Spleen (tissue), 13 donors: ENCODE measurements at regions of chr20 and their contacts with region 1.

Region 1: DNA sequence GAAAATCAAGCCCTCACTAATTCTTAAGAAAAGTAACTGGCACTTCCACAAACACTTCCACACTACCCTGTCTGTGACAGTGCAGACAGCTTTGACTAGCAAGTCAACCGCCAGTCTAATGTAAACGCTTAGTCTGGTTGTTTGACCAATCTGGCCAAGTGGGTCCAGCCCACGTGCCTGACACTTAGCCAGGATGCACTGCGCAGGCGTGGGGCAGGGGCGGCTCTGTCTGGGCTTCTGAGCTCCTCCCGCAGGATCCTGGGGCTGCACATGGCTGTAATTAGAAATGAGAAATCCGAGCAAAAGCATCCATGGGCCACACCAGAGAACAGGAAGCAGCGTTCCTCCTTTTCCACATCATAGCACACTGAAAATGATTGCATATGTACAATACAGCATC is 424.1 kb downstream of the FOXA2 start:
- DNase-seq: no peak
- H3K4me3 ChIP-seq: no peak overlapping the region
- H3K27ac ChIP-seq: no peak overlapping the region
- H3K4me1 ChIP-seq: no peaks in the 10 kb centered on the region
- H3K27me3 ChIP-seq: no peaks in the 10 kb centered on the region
- CTCF ChIP-seq: no peak
- POLR2A ChIP-seq: no peak

Region 2: GRCh38 chr20:22217712-22218352 is 57.6 kb after region 1 on chr20:
- intact Hi-C with region 1: loop called (anchors 10 kb)
- DNase-seq: no peak
- H3K4me3 ChIP-seq: no peak overlapping the region
- H3K27ac ChIP-seq: no peak overlapping the region
- H3K4me1 ChIP-seq: no peaks in the 10 kb centered on the region
- H3K27me3 ChIP-seq: peaks cover 0 to 10% (median 0%) of the 10 kb centered on the region in 7 donors
- CTCF ChIP-seq: no peak
- POLR2A ChIP-seq: no peak

Region 3: GRCh38 chr20:22312744-22313346 is 152.6 kb after region 1 on chr20:
- intact Hi-C with region 1: no loop called
- DNase-seq: no peak
- H3K4me3 ChIP-seq: no peak overlapping the region
- H3K27ac ChIP-seq: no peak overlapping the region
- H3K4me1 ChIP-seq: no peaks in the 10 kb centered on the region
- H3K27me3 ChIP-seq: peaks cover 0 to 15% (median 0%) of the 10 kb centered on the region in 7 donors
- CTCF ChIP-seq: peak in 8 of 11 experiments; percentile 23 to 53 (median 44)
- POLR2A ChIP-seq: no peak